ENCODE measurements at regions of chr11 and their contacts with region 1.

Region 1: GRCh38 chr11:55697817-55698216 is 35.8 kb downstream of the OR4C6 start:
- DNase-seq: no peak
- ATAC-seq: no peak
- H3K4me3 ChIP-seq: no peak overlapping the region
- H3K27ac ChIP-seq: no peak overlapping the region
- H3K4me1 ChIP-seq: no peaks in the 10 kb centered on the region
- H3K27me3 ChIP-seq: no peaks in the 10 kb centered on the region
- CTCF ChIP-seq: no peak

Region 2: DNA sequence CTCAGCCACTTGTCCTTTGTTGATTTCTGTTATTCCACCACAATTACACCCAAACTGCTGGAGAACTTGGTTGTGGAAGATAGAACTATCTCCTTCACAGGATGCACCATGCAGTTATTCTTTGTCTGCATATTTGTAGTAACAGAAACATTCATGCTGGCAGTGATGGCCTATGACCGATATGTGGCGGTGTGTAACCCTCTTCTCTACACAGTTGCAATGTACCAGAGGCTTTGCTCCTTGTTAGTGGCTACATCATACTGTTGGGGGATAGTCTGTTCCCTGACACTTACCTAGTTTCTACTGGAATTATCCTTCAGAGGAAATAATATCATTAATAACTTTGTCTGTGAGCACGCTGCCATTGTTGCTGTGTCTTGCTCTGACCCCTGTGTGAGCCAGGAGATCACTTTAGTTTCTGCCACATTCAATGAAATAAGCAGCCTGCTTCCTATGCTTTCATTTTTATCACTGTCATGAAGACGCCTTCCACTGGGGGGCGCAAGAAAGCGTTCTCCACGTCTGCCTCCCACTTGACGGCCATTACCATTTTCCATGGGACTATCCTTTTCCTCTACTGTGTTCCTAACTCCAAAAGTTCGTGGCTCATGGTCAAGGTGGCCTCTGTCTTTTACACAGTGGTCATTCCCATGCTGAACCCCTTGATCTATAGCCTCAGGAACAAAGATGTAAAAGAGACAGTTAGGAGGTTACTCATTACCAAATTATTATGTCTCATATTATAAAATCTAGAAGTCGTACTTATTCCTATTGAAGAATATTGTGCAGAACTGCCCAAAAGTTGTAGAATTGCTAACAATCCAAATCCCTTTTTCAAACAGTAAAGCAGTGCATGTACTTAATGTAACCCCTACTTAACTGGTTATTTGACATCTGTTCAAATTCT is 17.4 kb after region 1 on chr11:
- CTCF ChIA-PET with region 1: interaction called, 20 read pairs
- POLR2A ChIA-PET with region 1: no interaction called
- intact Hi-C with region 1: no loop called
- DNase-seq: peak; percentile 30
- ATAC-seq: no peak
- H3K4me3 ChIP-seq: no peak overlapping the region
- H3K27ac ChIP-seq: no peak overlapping the region
- H3K4me1 ChIP-seq: no peaks in the 10 kb centered on the region
- H3K27me3 ChIP-seq: no peaks in the 10 kb centered on the region
- CTCF ChIP-seq: peak; percentile 64

Region 3: GRCh38 chr11:55793321-55793720 is 95.5 kb after region 1 on chr11:
- CTCF ChIA-PET with region 1: no interaction called
- POLR2A ChIA-PET with region 1: no interaction called
- intact Hi-C with region 1: no loop called
- DNase-seq: no peak
- ATAC-seq: no peak
- H3K4me3 ChIP-seq: no peak overlapping the region
- H3K27ac ChIP-seq: no peak overlapping the region
- H3K4me1 ChIP-seq: no peaks in the 10 kb centered on the region
- H3K27me3 ChIP-seq: no peaks in the 10 kb centered on the region
- CTCF ChIP-seq: no peak

Measured in PC-3 (cell line).